AG04450 (cell line): ENCODE measurements at regions of chr1 and their contacts with region 1.

Region 1: GRCh38 chr1:207963427-207964194 is 52.7 kb upstream of the CD34 start:
- DNase-seq: peak; percentile 46
- H3K4me3 ChIP-seq: peak overlapping the region; percentile 63
- H3K27ac ChIP-seq: no peak overlapping the region
- H3K27me3 ChIP-seq: no peaks in the 10 kb centered on the region
- CTCF ChIP-seq: peak; percentile 84

Region 2: GRCh38 chr1:207797229-207797961 is 166.2 kb before region 1 on chr1:
- CTCF ChIA-PET with region 1: interaction called, 34 read pairs
- POLR2A ChIA-PET with region 1: no interaction called
- DNase-seq: peak; percentile 68
- H3K4me3 ChIP-seq: no peak overlapping the region
- H3K27ac ChIP-seq: no peak overlapping the region
- H3K27me3 ChIP-seq: no peaks in the 10 kb centered on the region
- CTCF ChIP-seq: peak; percentile 81

Region 3: DNA sequence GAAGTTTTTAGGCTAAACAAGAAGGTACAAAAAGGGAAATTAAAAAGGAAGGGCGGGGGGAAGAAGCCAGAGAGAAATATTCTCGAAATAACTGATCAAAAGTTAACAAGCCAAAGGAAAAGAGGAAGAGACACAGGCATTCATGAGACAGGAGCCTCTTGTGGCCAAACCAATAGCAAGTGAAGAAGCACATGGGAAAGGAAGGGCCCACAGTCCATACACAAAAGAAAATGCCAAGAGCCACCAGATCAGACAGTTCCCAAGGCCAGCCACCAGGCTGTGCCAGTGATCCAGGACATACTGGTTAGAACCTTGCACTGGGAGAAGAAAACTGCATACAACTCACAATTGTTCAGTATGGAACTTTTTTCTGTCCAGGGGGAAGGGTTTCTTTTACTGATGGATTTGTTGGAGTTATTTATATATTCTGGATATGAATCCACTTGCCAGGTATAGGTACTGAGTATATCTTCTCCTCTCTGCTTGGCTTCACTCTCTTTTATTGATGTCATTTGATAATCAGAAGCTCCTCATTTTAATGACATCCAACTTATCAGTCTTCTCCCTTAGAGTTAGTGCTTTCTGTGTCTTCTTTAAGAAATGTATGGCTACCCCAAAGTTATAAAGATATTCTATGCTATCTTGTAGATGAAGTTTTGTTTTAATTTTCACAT is 135.0 kb before region 1 on chr1:
- CTCF ChIA-PET with region 1: interaction called, 59 read pairs
- POLR2A ChIA-PET with region 1: no interaction called
- DNase-seq: peak; percentile 64
- H3K4me3 ChIP-seq: no peak overlapping the region
- H3K27ac ChIP-seq: no peak overlapping the region
- H3K27me3 ChIP-seq: no peaks in the 10 kb centered on the region
- CTCF ChIP-seq: peak; percentile 84

Region 4: DNA sequence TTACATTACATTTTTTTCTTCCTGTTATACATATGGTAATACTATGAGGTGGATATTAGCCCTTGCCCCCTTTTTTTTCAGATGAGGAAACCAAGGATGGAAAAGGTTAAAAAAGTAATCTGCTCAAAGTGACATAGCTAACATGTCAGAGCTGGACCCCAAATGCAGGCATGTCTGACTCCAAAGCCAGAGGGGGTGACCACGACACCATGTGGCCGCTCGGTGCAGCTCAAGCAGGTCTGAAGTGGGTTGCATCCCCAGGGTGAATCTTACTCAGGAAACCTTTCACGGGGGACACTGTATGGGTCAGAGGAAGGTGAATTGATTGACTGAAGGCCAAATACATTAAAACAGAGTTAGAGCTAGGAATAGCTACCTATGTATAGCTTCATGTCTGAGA is 87.5 kb before region 1 on chr1:
- CTCF ChIA-PET with region 1: interaction called, 374 read pairs
- POLR2A ChIA-PET with region 1: no interaction called
- DNase-seq: no peak
- H3K4me3 ChIP-seq: no peak overlapping the region
- H3K27ac ChIP-seq: no peak overlapping the region
- H3K27me3 ChIP-seq: peaks cover 8% of the 10 kb centered on the region
- CTCF ChIP-seq: peak; percentile 32

Region 5: DNA sequence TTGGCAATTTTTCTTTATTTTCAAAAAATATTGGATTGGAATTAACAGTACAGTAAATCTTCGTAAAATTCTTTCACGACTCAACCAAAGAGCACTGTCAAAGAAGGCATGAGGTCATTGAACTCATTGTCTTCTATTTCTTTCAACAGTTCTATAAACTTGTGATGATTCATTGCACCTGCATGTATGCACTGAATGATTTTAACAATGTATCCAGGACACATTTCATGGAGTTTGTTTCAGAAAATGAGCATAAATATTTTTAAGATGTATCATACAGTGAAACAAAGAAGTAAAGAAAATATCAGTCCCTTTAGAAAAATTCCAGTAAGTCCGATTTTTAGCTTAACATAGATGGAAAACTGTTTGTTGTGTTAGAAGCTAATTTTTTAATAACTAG is 19.0 kb before region 1 on chr1:
- CTCF ChIA-PET with region 1: interaction called, 39 read pairs
- POLR2A ChIA-PET with region 1: interaction called, 3 read pairs
- DNase-seq: no peak
- H3K4me3 ChIP-seq: no peak overlapping the region
- H3K27ac ChIP-seq: no peak overlapping the region
- H3K27me3 ChIP-seq: no peaks in the 10 kb centered on the region
- CTCF ChIP-seq: no peak

Region 6: GRCh38 chr1:208047476-208047934 is 83.9 kb after region 1 on chr1:
- CTCF ChIA-PET with region 1: interaction called, 12 read pairs
- POLR2A ChIA-PET with region 1: no interaction called
- DNase-seq: no peak
- H3K4me3 ChIP-seq: no peak overlapping the region
- H3K27ac ChIP-seq: peak overlapping the region; percentile 31
- H3K27me3 ChIP-seq: no peaks in the 10 kb centered on the region
- CTCF ChIP-seq: no peak